H1 (cell line): ENCODE measurements at regions of chr19 and their contacts with region 1.

Region 1: DNA sequence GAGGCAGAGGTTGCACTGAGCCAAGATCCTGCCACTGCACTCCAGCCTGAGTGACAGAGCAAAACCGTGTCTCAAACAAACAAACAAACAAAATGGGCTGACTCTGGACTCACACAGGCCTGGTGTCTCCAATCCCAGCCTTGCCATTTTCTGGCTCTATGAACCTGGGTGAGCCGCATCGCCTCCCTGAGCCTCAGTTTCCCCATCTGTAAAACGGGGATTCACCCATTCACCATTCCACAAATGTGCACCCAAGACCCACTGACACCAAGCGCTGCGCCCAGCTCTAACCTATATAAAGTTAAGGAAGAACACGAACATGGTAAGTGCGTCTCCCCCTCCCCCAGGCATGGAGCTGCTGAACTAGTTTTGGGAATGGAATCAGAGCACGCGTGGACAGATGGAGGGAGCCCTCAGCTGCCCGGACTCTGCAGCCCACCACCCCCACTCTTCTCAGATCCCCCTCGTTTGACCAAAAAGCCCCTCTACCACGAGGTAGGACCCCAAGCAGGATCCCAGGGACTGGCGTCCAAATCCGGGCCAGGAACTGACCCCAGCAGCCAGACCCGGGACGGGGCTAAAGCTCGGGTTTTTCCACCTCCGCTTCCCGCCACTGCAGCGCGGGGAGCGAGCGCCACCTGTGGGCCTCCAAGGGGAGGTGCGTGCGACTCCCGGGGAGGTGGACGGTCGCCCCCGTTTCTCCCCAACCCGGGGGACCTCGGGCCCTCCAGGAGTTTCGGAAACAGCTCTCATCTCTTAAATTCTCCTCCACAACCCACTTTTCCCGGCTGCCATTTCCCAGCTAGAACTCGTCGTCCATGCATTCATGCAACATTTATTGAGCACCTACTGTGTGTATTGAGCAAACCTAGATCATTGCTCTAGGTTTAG is 33.0 kb upstream of the ADGRE5 start:
- DNase-seq: peak; percentile 19 to 92
- H3K4me3 ChIP-seq: peak overlapping the region in 1 of 4 experiments; percentile 28; a peak in 1 of 8 replicates
- H3K27ac ChIP-seq: no peak overlapping the region
- H3K4me1 ChIP-seq: peaks cover 0 to 4% (median 0%) of the 10 kb centered on the region in 4 experiments; a peak in 5 of 7 replicates
- H3K27me3 ChIP-seq: no peaks in the 10 kb centered on the region
- CTCF ChIP-seq: peak; percentile 91 to 96 (median 92)
- EP300 ChIP-seq: 0 out of 3 replicates have a peak, but pooled peaks of 1 of the 2 experiments have one; percentile 11
- POLR2A ChIP-seq: no peak
- RAD21 ChIP-seq: peak; percentile 96 to 97

Region 2: GRCh38 chr19:14147797-14148605 is 200.2 kb before region 1 on chr19:
- CTCF ChIA-PET with region 1: interaction called, 16 read pairs
- POLR2A ChIA-PET with region 1: interaction called, 7 read pairs
- DNase-seq: peak in 1 of 2 experiments; percentile 73
- H3K4me3 ChIP-seq: no peak overlapping the region
- H3K27ac ChIP-seq: 0 out of 2 replicates have a peak overlapping the region, but pooled peaks have one; percentile 1
- H3K4me1 ChIP-seq: peaks cover 0 to 21% (median 15%) of the 10 kb centered on the region in 4 experiments; a peak in 6 of 7 replicates
- H3K27me3 ChIP-seq: no peaks in the 10 kb centered on the region; a peak in 1 of 7 replicates
- CTCF ChIP-seq: peak; percentile 43 to 52 (median 47); a peak in 3 of 4 replicates
- EP300 ChIP-seq: no peak
- POLR2A ChIP-seq: peak in 1 of 2 experiments; percentile 68; a peak in 1 of 3 replicates
- RAD21 ChIP-seq: peak; percentile 44 to 56

Region 3: GRCh38 chr19:14218620-14219330 is 129.5 kb before region 1 on chr19:
- CTCF ChIA-PET with region 1: interaction called, 11 read pairs
- POLR2A ChIA-PET with region 1: interaction called, 3 read pairs
- DNase-seq: no peak
- H3K4me3 ChIP-seq: no peak overlapping the region
- H3K27ac ChIP-seq: no peak overlapping the region
- H3K4me1 ChIP-seq: peaks cover 0 to 5% (median 0%) of the 10 kb centered on the region in 4 experiments; a peak in 2 of 7 replicates
- H3K27me3 ChIP-seq: no peaks in the 10 kb centered on the region
- CTCF ChIP-seq: no peak
- EP300 ChIP-seq: no peak
- POLR2A ChIP-seq: no peak
- RAD21 ChIP-seq: no peak

Region 4: DNA sequence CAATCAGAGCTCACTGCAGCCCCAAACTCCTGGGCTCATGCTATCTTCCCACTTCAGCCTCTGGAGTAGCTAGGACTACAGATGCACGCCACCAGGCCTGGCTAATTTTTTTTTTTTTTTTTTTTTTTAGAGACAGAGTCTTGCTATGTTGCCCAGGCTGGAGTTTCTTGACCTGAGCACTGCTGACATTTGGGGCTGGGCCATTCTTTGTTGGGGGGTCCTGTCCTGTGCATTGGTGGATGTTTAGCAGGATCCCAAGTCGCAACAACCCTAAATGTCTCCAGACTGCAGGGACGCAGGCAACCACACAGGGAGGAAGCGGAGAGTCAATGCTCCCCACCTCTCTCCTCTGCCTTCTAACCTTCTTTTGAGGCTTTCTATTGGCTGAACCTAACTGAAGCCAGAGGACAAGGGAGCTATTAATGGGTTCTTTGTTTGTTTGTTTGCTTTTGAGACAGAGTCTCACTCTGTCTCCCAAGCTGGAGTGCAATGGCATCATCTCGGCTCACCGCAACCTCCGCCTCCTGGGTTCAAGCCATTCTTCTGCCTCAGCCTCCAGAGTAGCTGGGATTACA is 25.3 kb before region 1 on chr19:
- CTCF ChIA-PET with region 1: interaction called, 12 read pairs
- POLR2A ChIA-PET with region 1: no interaction called
- DNase-seq: no peak
- H3K4me3 ChIP-seq: no peak overlapping the region
- H3K27ac ChIP-seq: no peak overlapping the region
- H3K4me1 ChIP-seq: no peaks in the 10 kb centered on the region; a peak in 1 of 7 replicates
- H3K27me3 ChIP-seq: no peaks in the 10 kb centered on the region
- CTCF ChIP-seq: no peak
- EP300 ChIP-seq: no peak
- POLR2A ChIP-seq: no peak
- RAD21 ChIP-seq: no peak

Region 5: GRCh38 chr19:14366498-14366915 is 18.3 kb after region 1 on chr19:
- CTCF ChIA-PET with region 1: interaction called, 22 read pairs
- POLR2A ChIA-PET with region 1: interaction called, 7 read pairs
- DNase-seq: peak; percentile 46 to 93
- H3K4me3 ChIP-seq: no peak overlapping the region
- H3K27ac ChIP-seq: no peak overlapping the region
- H3K4me1 ChIP-seq: peaks cover 0 to 8% (median 2%) of the 10 kb centered on the region in 4 experiments; a peak in 3 of 7 replicates
- H3K27me3 ChIP-seq: no peaks in the 10 kb centered on the region
- CTCF ChIP-seq: no peak
- EP300 ChIP-seq: no peak
- POLR2A ChIP-seq: no peak
- RAD21 ChIP-seq: no peak

Region 6: GRCh38 chr19:14405758-14406644 is 57.8 kb after region 1 on chr19:
- CTCF ChIA-PET with region 1: interaction called, 54 read pairs
- POLR2A ChIA-PET with region 1: interaction called, 4 read pairs
- DNase-seq: peak; percentile 97 to 99
- H3K4me3 ChIP-seq: peak overlapping the region; percentile 13 to 48 (median 22); a peak in 4 of 8 replicates
- H3K27ac ChIP-seq: peak overlapping the region; percentile 44
- H3K4me1 ChIP-seq: peaks cover 0 to 13% (median 5%) of the 10 kb centered on the region in 4 experiments; a peak in 5 of 7 replicates
- H3K27me3 ChIP-seq: no peaks in the 10 kb centered on the region
- CTCF ChIP-seq: peak; percentile 81 to 97 (median 97)
- EP300 ChIP-seq: no peak
- POLR2A ChIP-seq: peak in 1 of 2 experiments; percentile 65; a peak in 1 of 3 replicates
- RAD21 ChIP-seq: peak; percentile 90 to 96